Testis (tissue), 5 donors: ENCODE measurements at regions of chr12 and their contacts with region 1.

Region 1: GRCh38 chr12:76031537-76032073 is at the start of gene PHLDA1:
- DNase-seq: peak; percentile 93
- H3K4me3 ChIP-seq: peak within 1 kb of the TSS; percentile 71 to 91
- H3K27ac ChIP-seq: peak within 1 kb of the TSS; percentile 94 to 99
- H3K4me1 ChIP-seq: peaks cover 12% of the 10 kb centered on the region
- H3K27me3 ChIP-seq: no peaks in the 10 kb centered on the region
- CTCF ChIP-seq: peak; percentile 47 to 73 (median 66)
- POLR2A ChIP-seq: peak; percentile 31
- total RNA-seq, gene PHLDA1: 7.7 to 10.9 TPM

Region 2: GRCh38 chr12:75560167-75560566 is 471.4 kb before region 1 on chr12:
- intact Hi-C with region 1: loop called (anchors 10 kb)
- DNase-seq: no peak
- H3K4me3 ChIP-seq: no peak overlapping the region
- H3K27ac ChIP-seq: no peak overlapping the region
- H3K4me1 ChIP-seq: no peaks in the 10 kb centered on the region
- H3K27me3 ChIP-seq: no peaks in the 10 kb centered on the region
- CTCF ChIP-seq: peak; percentile 37 to 49 (median 46)
- POLR2A ChIP-seq: no peak

Region 3: DNA sequence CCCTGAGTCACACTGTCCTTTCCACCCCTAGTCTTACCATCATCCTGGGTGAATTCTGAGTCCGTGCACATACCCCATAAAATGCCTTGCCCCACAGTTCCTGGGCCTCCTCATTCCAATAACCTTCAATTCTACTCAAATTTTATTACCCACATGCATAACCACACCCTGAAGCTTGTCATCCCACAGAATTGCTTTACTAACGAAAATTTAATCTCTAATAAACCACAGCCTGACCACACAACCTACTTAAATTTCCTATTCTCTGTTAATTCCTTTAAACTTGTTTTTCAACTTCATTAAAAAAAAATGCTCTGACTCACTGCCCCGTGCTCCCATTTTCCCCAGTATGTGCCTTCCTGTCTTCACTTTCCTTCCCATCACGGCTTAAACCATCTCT is 205.9 kb before region 1 on chr12:
- intact Hi-C with region 1: no loop called
- DNase-seq: no peak
- H3K4me3 ChIP-seq: no peak overlapping the region
- H3K27ac ChIP-seq: no peak overlapping the region
- H3K4me1 ChIP-seq: no peaks in the 10 kb centered on the region
- H3K27me3 ChIP-seq: no peaks in the 10 kb centered on the region
- CTCF ChIP-seq: no peak
- POLR2A ChIP-seq: no peak

Region 4: GRCh38 chr12:76083904-76084862 is 52.6 kb after region 1 on chr12 and contains the start of gene NAP1L1:
- intact Hi-C with region 1: loop called (anchors 2 kb)
- DNase-seq: peak; percentile 99
- H3K4me3 ChIP-seq: peak within 1 kb of the TSS; percentile 73 to 94
- H3K27ac ChIP-seq: peak within 1 kb of the TSS; percentile 98 to 100
- H3K4me1 ChIP-seq: peaks cover 10% of the 10 kb centered on the region
- H3K27me3 ChIP-seq: no peaks in the 10 kb centered on the region
- CTCF ChIP-seq: no peak
- POLR2A ChIP-seq: peak; percentile 45
- total RNA-seq, gene NAP1L1: 313 to 366 TPM

Region 5: GRCh38 chr12:76277480-76277879 is 245.9 kb after region 1 on chr12:
- intact Hi-C with region 1: no loop called
- DNase-seq: no peak
- H3K4me3 ChIP-seq: no peak overlapping the region
- H3K27ac ChIP-seq: no peak overlapping the region
- H3K4me1 ChIP-seq: no peaks in the 10 kb centered on the region
- H3K27me3 ChIP-seq: no peaks in the 10 kb centered on the region
- CTCF ChIP-seq: no peak
- POLR2A ChIP-seq: no peak